Tibial artery (tissue), 4 donors: ENCODE measurements at regions of chr12 and their contacts with region 1.

Region 1: DNA sequence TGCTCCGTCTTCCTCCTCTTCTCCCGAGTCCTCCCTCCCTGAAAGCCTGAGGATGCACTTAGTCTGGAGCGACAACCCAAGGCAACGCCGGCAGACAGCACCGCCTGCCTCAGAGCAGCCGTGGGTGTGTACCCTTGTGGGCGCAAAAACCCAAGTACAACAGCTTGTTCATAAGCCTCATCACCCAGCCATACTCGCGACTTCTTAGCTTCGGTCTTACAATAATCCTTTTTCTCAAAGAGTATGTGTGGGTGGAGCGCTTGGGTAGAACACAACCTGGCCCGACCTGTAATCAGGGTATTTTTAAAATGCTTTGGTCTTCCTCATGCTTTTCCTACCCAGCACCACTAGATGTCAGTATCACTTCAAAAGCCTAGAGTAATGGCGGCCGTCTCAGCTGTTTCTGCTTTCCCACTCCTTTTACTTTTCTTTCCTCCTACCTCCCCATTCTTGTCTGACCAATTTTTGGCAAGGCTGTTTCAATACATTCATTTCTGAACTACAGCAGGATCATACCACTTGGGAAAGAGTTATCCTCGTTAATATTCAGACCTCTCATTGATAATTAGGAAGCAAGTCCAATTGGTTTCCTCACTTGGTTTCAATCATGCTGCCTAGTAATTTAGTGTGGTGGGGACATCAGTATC is 198.9 kb downstream of the EPS8 start:
- DNase-seq: peak in 1 of 2 donors; percentile 31
- H3K4me3 ChIP-seq: peak overlapping the region; percentile 38 to 45
- H3K27ac ChIP-seq: peak overlapping the region; percentile 51 to 57
- H3K4me1 ChIP-seq: peaks cover 0 to 8% (median 0%) of the 10 kb centered on the region in 4 donors
- H3K27me3 ChIP-seq: no peaks in the 10 kb centered on the region
- CTCF ChIP-seq: peak; percentile 84 to 93

Region 2: GRCh38 chr12:15789220-15790171 is 199.2 kb after region 1 on chr12 and contains the start of gene EPS8:
- intact Hi-C with region 1: loop called (anchors 10 kb)
- DNase-seq: peak; percentile 90 to 96
- H3K4me3 ChIP-seq: peak within 1 kb of the TSS; percentile 75 to 92
- H3K27ac ChIP-seq: peak within 1 kb of the TSS; percentile 87 to 89
- H3K4me1 ChIP-seq: peaks cover 0 to 23% (median 7%) of the 10 kb centered on the region in 4 donors
- H3K27me3 ChIP-seq: no peaks in the 10 kb centered on the region
- CTCF ChIP-seq: no peak

Region 3: GRCh38 chr12:15856097-15856982 is 266.0 kb after region 1 on chr12:
- intact Hi-C with region 1: loop called (anchors 2 kb)
- DNase-seq: peak in 1 of 2 donors; percentile 36
- H3K4me3 ChIP-seq: no peak overlapping the region
- H3K27ac ChIP-seq: peak overlapping the region; percentile 16 to 44
- H3K4me1 ChIP-seq: peaks cover 0 to 24% (median 3%) of the 10 kb centered on the region in 4 donors
- H3K27me3 ChIP-seq: no peaks in the 10 kb centered on the region
- CTCF ChIP-seq: peak; percentile 78 to 90